Motor neuron (in vitro differentiated cells): ENCODE measurements at regions of chr22 and their contacts with region 1.

Region 1: DNA sequence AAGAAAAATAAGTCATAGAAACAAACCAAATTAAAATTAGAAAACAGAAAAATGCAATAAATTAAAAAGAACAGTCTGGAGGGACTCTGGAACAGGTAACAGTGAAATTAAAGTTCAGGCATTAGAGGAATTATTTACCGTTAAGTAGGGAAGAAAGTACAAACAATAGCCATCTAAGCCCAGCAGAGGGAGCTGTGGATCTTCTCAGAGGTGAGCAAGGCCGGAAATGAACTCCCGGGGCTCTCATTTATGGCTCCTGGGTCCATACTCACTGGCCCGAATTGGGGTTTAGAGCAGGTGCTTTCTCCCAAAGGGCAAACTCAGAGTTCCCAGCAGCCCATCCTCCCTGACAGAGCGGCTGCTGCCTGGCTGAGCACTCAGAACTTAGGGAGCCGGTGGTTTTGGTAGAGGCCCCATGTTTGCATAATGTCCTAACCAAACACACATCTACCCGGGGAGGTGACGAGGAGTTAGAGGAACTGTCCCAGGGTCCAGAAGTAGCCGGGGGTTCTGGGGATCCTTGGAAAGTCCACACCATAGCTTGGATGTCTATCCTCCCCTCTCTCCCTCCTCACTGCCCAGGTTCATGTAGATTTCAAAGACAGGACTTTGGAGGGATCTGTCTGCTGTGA is 87.8 kb upstream of the VPREB1 start:
- ATAC-seq: peak in 3 of 8 experiments; percentile 75 to 88 (median 84)
- H3K4me3 ChIP-seq: no peak overlapping the region
- H3K27ac ChIP-seq: peak overlapping the region in 1 of 2 donors; percentile 2
- H3K4me1 ChIP-seq: no peaks in the 10 kb centered on the region

Region 2: DNA sequence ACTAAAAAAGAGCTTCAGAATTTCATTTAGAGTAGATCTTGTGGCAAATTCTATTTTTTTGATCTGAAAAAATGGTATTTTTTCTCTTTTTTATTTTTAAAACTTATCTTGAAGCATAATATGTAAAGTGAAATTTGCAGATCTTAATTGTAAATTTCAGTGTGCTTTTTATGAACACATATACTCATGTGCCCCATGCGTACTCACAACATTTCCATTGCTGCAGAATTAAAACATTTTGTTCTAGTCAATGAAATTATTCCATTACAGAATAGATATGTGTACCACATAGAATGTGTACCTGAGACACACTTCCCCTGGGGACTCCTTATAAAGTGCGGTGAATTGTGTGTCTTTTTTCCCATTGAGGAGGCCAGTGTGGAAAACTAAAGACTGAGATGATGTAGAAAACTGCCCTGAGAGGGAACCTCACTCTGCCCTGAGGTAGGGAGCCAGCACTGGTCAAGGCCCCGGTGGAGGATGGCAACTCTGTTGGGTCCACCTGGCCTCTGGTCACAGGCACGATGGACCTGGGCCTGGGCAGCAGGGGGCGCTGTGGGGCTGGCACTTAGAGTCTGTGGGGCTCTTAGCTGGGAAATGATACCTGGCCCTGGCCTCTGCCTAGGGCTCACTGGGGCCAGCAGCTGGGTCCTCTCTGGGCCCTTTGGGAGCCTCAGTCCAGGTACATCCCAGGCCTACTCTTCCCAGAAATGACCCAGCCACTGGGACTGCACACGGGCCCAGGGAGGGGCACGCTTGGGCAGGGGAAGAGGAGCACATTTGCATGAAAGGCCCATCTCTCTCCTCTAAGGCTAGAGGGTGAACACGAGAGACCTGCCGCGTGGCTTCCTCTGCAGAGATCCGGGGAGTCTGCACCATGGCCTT is 96.4 kb before region 1 on chr22:
- in situ Hi-C with region 1: loop called in 1 of 9 experiments (anchors 25 kb)
- ATAC-seq: peak; percentile 35 to 86 (median 63)
- H3K4me3 ChIP-seq: no peak overlapping the region
- H3K27ac ChIP-seq: peak overlapping the region; percentile 1 to 57
- H3K4me1 ChIP-seq: peaks cover 40 to 55% of the 10 kb centered on the region in 2 donors